Left colon (tissue), 2 donors: ENCODE measurements at regions of chr3 and their contacts with region 1.

Region 1: DNA sequence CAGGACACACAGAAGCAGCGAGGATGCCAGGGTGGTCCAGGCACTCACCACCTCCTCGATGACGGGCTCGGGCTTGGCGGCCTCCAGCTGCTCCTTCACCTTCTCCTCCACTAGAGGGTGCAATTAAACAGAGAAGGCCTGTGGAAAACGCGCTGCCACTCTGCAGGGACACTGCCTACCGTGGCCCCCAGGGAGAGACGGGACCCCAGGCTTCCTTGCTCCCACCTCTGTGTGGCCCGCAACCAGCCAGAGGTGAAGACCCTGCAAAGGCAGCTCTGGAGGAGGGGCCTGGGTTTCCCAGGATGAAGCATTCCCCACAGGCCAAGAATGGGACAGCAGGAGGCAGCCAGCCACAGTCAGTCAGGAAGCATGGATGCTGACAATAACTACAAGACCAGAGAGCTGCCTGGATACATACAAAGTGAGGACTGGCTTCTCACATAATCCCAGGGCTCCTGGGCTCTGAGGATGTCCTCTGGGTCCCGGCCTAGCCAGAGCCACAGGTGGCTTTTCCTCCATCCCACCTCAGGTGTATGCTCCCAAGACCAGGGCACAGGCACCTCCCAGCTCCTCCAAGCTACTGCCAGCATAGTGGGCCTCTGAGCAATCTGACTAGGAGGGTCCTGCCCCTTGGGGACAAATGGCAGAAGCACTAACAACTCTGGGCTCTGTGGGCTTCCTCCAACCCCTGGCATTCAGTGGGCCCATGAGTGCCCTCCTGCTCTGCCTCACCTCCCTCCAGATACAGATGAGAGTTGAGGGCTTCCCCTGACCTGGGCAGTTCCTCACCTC is 46.2 kb downstream of the PTH1R start:
- DNase-seq: no peak
- ATAC-seq: peak; percentile 53

Region 2: GRCh38 chr3:46990573-46991374 is 67.0 kb after region 1 on chr3:
- intact Hi-C with region 1: loop called in 1 of 2 experiments (anchors 5 kb)
- DNase-seq: peak in 1 of 2 donors; percentile 53
- ATAC-seq: no peak

Region 3: GRCh38 chr3:47002171-47003055 is 78.7 kb after region 1 on chr3:
- intact Hi-C with region 1: loop called in 1 of 2 experiments (anchors 5 kb)
- DNase-seq: no peak
- ATAC-seq: no peak